B cell (primary cell): ENCODE measurements at regions of chr7 and their contacts with region 1.

Region 1: GRCh38 chr7:37079420-37079819 is 355.1 kb upstream of the AOAH start:
- DNase-seq: no peak
- ATAC-seq: no peak
- H3K4me3 ChIP-seq: no peak overlapping the region
- H3K4me3 Mint-ChIP-seq: no peak overlapping the region
- H3K27ac ChIP-seq: no peak overlapping the region
- H3K27ac Mint-ChIP-seq: no peak overlapping the region
- H3K4me1 ChIP-seq: no peaks in the 10 kb centered on the region
- H3K4me1 Mint-ChIP-seq: peaks cover 13% of the 10 kb centered on the region
- H3K27me3 ChIP-seq: no peaks in the 10 kb centered on the region
- H3K27me3 Mint-ChIP-seq: no peaks in the 10 kb centered on the region
- CTCF ChIP-seq: no peak

Region 2: GRCh38 chr7:37045681-37046179 is 33.7 kb before region 1 on chr7:
- CTCF ChIA-PET with region 1: no interaction called
- POLR2A ChIA-PET with region 1: no interaction called
- intact Hi-C with region 1: no loop called
- DNase-seq: no peak
- ATAC-seq: no peak
- H3K4me3 ChIP-seq: no peak overlapping the region
- H3K4me3 Mint-ChIP-seq: no peak overlapping the region
- H3K27ac ChIP-seq: peak overlapping the region in 1 of 2 donors; percentile 38
- H3K27ac Mint-ChIP-seq: no peak overlapping the region
- H3K4me1 ChIP-seq: peaks cover 6 to 8% of the 10 kb centered on the region in 2 donors
- H3K4me1 Mint-ChIP-seq: peaks cover 24% of the 10 kb centered on the region
- H3K27me3 ChIP-seq: no peaks in the 10 kb centered on the region
- H3K27me3 Mint-ChIP-seq: no peaks in the 10 kb centered on the region
- CTCF ChIP-seq: no peak

Region 3: DNA sequence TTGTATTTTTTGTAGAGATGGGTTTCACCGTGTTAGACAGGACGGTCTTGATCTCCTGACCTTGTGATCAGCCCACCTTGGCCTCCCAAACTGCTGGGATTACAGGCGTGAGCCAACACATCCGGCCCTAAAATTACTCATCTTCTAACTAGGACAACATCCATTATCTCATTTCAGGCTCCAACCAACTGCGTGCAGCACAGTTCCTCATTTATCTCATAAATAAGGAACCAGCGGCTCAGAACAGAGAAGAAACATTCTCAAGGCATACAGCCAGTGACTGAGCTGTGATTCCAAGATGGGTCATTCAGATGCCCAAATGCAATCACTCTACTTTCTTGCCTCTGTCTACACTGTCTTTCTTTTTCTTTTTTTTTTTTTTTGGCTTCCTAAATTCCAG is 13.1 kb after region 1 on chr7:
- CTCF ChIA-PET with region 1: no interaction called
- POLR2A ChIA-PET with region 1: no interaction called
- intact Hi-C with region 1: loop called (anchors 1 kb)
- DNase-seq: no peak
- ATAC-seq: no peak
- H3K4me3 ChIP-seq: no peak overlapping the region
- H3K4me3 Mint-ChIP-seq: no peak overlapping the region
- H3K27ac ChIP-seq: no peak overlapping the region
- H3K27ac Mint-ChIP-seq: no peak overlapping the region
- H3K4me1 ChIP-seq: no peaks in the 10 kb centered on the region
- H3K4me1 Mint-ChIP-seq: no peaks in the 10 kb centered on the region
- H3K27me3 ChIP-seq: no peaks in the 10 kb centered on the region
- H3K27me3 Mint-ChIP-seq: no peaks in the 10 kb centered on the region
- CTCF ChIP-seq: no peak